H1 (cell line): ENCODE measurements at regions of chr5 and their contacts with region 1.

Region 1: GRCh38 chr5:175718401-175719108 is 60.7 kb downstream of the HRH2 start:
- DNase-seq: peak in 1 of 2 experiments; percentile 82
- H3K4me3 ChIP-seq: no peak overlapping the region
- H3K27ac ChIP-seq: no peak overlapping the region
- H3K4me1 ChIP-seq: no peaks in the 10 kb centered on the region
- H3K27me3 ChIP-seq: no peaks in the 10 kb centered on the region
- CTCF ChIP-seq: peak; percentile 72 to 90 (median 74)
- EP300 ChIP-seq: no peak
- POLR2A ChIP-seq: no peak
- RAD21 ChIP-seq: peak; percentile 89 to 92

Region 2: DNA sequence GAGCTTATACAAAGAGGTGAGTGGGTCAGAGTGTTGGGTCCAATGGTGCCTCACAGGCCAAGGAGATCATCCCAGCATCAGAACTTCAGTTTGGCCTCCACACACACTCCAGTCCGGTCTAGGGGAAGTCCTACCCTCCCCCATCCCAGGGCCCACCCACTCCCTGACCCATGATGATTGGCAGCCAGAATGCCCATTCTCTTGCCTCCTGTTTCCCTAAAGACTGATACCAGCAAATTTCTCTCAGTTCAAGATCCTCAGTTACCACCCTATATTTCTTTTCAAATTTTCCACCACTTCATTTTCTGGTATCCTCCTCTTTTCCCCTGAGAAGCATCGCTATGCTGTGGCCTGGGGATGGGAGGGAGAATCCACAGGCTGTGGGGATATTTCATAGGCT is 296.5 kb before region 1 on chr5:
- CTCF ChIA-PET with region 1: no interaction called
- POLR2A ChIA-PET with region 1: no interaction called
- DNase-seq: no peak
- H3K4me3 ChIP-seq: no peak overlapping the region
- H3K27ac ChIP-seq: no peak overlapping the region
- H3K4me1 ChIP-seq: peaks cover 0 to 3% (median 0%) of the 10 kb centered on the region in 4 experiments; a peak in 1 of 7 replicates
- H3K27me3 ChIP-seq: no peaks in the 10 kb centered on the region
- CTCF ChIP-seq: no peak
- EP300 ChIP-seq: no peak
- POLR2A ChIP-seq: no peak
- RAD21 ChIP-seq: no peak

Region 3: GRCh38 chr5:175526691-175527090 is 191.9 kb before region 1 on chr5:
- CTCF ChIA-PET with region 1: interaction called, 199 read pairs
- POLR2A ChIA-PET with region 1: no interaction called
- DNase-seq: no peak
- H3K4me3 ChIP-seq: no peak overlapping the region
- H3K27ac ChIP-seq: no peak overlapping the region
- H3K4me1 ChIP-seq: no peaks in the 10 kb centered on the region
- H3K27me3 ChIP-seq: no peaks in the 10 kb centered on the region
- CTCF ChIP-seq: no peak
- EP300 ChIP-seq: no peak
- POLR2A ChIP-seq: no peak
- RAD21 ChIP-seq: no peak

Region 4: GRCh38 chr5:175617447-175617846 is 101.1 kb before region 1 on chr5:
- CTCF ChIA-PET with region 1: interaction called, 18 read pairs
- POLR2A ChIA-PET with region 1: no interaction called
- DNase-seq: peak in 1 of 2 experiments; percentile 57
- H3K4me3 ChIP-seq: no peak overlapping the region
- H3K27ac ChIP-seq: no peak overlapping the region
- H3K4me1 ChIP-seq: no peaks in the 10 kb centered on the region; a peak in 2 of 7 replicates
- H3K27me3 ChIP-seq: no peaks in the 10 kb centered on the region
- CTCF ChIP-seq: peak; percentile 59 to 68 (median 63)
- EP300 ChIP-seq: no peak
- POLR2A ChIP-seq: no peak
- RAD21 ChIP-seq: peak; percentile 64 to 78

Region 5: GRCh38 chr5:175689147-175689991 is 29.2 kb before region 1 on chr5:
- CTCF ChIA-PET with region 1: interaction called, 27 read pairs
- POLR2A ChIA-PET with region 1: no interaction called
- DNase-seq: no peak
- H3K4me3 ChIP-seq: no peak overlapping the region
- H3K27ac ChIP-seq: no peak overlapping the region
- H3K4me1 ChIP-seq: peaks cover 0 to 8% (median 3%) of the 10 kb centered on the region in 4 experiments; a peak in 3 of 7 replicates
- H3K27me3 ChIP-seq: no peaks in the 10 kb centered on the region
- CTCF ChIP-seq: no peak
- EP300 ChIP-seq: no peak
- POLR2A ChIP-seq: no peak
- RAD21 ChIP-seq: no peak

Region 6: GRCh38 chr5:175696139-175696854 is 22.3 kb before region 1 on chr5:
- CTCF ChIA-PET with region 1: interaction called, 27 read pairs
- POLR2A ChIA-PET with region 1: no interaction called
- DNase-seq: peak; percentile 68 to 84
- H3K4me3 ChIP-seq: no peak overlapping the region
- H3K27ac ChIP-seq: 0 out of 2 replicates have a peak overlapping the region, but pooled peaks have one; percentile 0
- H3K4me1 ChIP-seq: peaks cover 0 to 10% (median 4%) of the 10 kb centered on the region in 4 experiments; a peak in 5 of 7 replicates
- H3K27me3 ChIP-seq: no peaks in the 10 kb centered on the region; a peak in 1 of 7 replicates
- CTCF ChIP-seq: peak in 2 of 3 experiments; percentile 91 to 96; a peak in 3 of 4 replicates
- EP300 ChIP-seq: peak in 1 of 2 experiments; percentile 67; a peak in 1 of 3 replicates
- POLR2A ChIP-seq: no peak
- RAD21 ChIP-seq: peak; percentile 76 to 85